ENCODE measurements at regions of chr20 and their contacts with region 1.

Region 1: DNA sequence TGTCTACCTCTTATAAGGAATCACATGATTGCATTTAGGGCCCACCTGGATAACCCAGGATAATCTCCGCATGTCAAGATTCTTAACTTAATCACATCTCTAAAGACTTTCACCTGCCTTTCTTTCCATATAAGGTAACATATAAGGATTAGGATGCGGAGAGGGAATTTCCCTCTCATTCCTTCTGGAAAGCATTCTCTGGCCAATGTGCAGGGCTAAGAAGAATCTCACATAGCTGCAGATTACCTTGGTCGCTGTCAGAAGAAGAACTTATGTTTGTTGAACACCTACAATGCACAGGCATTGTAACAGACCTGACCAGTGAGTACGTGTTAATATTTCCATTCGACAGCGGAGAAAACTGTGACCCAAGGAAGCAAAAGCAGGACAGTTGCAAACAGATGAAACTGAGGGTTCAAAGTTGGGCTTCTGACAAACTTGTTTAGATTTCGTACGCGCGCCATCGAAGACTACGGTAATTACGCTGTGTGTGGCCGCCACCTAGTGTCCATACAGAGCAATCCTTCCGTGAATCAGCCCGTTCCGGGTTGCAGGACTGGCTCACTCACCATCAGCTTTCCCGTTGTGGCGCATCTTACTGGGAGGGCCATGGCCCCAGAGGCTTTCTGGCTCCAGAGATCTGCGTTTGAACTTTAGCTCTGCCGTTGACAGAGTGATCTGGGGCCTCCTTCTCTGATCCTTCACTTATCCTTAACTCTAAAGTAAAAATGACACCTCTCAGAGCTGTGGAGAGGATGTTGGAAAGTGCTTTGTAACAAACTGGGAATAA is 9.5 kb downstream of the C20orf202 start:
- DNase-seq: peak; percentile 55 to 75 (median 65)
- ATAC-seq: peak in 3 of 4 donors; percentile 88 to 92 (median 91)
- H3K4me3 ChIP-seq: no peak overlapping the region
- H3K27ac ChIP-seq: no peak overlapping the region
- H3K4me1 ChIP-seq: peaks cover 0 to 7% (median 0%) of the 10 kb centered on the region in 12 donors
- H3K27me3 ChIP-seq: peaks cover 0 to 12% (median 0%) of the 10 kb centered on the region in 9 donors
- CTCF ChIP-seq: peak; percentile 67 to 87 (median 80)
- POLR2A ChIP-seq: no peak

Region 2: GRCh38 chr20:815914-816606 is 396.7 kb before region 1 on chr20:
- intact Hi-C with region 1: loop called in 7 of 10 experiments (anchors 2 to 10 kb)
- DNase-seq: peak in 4 of 5 donors; percentile 33 to 65 (median 44)
- ATAC-seq: peak in 3 of 4 donors; percentile 48 to 59 (median 48)
- H3K4me3 ChIP-seq: no peak overlapping the region
- H3K27ac ChIP-seq: no peak overlapping the region
- H3K4me1 ChIP-seq: peaks cover 0 to 6% (median 0%) of the 10 kb centered on the region in 12 donors
- H3K27me3 ChIP-seq: peaks cover 0 to 23% (median 0%) of the 10 kb centered on the region in 9 donors
- CTCF ChIP-seq: peak; percentile 94 to 99 (median 97)
- POLR2A ChIP-seq: no peak

Region 3: DNA sequence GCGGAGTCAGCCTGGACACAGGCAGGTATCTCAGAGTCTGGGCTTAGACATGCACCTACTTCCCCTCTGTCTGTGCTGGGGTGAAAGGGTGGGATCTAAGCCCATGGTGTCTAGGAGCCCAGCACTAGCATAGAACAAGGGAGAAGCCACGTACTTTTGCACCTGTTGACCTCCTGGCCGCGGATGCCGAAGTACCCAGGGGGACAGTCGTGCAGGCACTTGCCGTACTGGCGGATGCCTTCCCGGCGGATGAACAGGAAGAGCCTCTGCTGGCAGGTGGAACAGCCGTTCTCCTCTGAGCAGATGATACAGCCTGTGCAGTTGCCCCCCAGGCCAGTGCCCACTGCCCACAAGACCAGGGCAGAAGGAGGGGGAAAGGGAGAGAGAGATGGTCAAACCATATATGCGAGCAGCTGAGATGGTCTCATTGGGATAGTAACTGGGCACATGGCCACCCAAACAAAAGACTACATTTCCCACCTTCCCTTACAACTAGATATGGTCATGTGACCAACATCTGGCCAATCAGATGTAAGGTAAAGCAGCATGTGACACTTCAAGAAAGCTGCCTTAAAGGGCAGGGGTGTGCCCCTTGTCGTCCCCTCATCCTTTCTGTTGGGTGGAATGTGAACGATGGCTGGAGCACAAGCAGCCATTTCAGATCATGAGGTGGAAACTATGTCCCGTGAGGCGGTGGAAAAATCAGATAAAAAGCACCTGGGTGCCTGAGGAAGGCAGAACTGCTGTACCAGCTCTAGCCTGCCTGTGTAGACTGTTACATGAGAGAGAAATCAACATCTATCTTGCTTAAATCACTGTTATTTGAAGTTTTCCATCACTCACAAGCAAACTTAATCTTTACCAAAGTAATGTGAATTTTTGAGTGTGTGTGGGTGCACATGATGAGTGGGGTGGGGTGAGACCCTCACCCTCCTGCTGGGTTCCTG is 244.7 kb before region 1 on chr20:
- intact Hi-C with region 1: loop called in 1 of 10 experiments (anchors 10 kb)
- DNase-seq: peak in 1 of 5 donors; percentile 38
- ATAC-seq: no peak
- H3K4me3 ChIP-seq: no peak overlapping the region
- H3K27ac ChIP-seq: no peak overlapping the region
- H3K4me1 ChIP-seq: peaks cover 0 to 4% (median 0%) of the 10 kb centered on the region in 12 donors
- H3K27me3 ChIP-seq: peaks cover 0 to 27% (median 0%) of the 10 kb centered on the region in 9 donors
- CTCF ChIP-seq: no peak
- POLR2A ChIP-seq: no peak

Region 4: GRCh38 chr20:1118336-1119127 is 94.3 kb before region 1 on chr20 and contains the start of gene PSMF1:
- intact Hi-C with region 1: loop called in 1 of 10 experiments (anchors 10 kb)
- DNase-seq: peak; percentile 94 to 97 (median 96)
- ATAC-seq: peak; percentile 97 to 99 (median 99)
- H3K4me3 ChIP-seq: peak within 1 kb of the TSS; percentile 68 to 100 (median 95)
- H3K27ac ChIP-seq: peak within 1 kb of the TSS; percentile 9 to 92 (median 80)
- H3K4me1 ChIP-seq: peaks cover 16 to 55% (median 50%) of the 10 kb centered on the region in 12 donors
- H3K27me3 ChIP-seq: no peaks in the 10 kb centered on the region
- CTCF ChIP-seq: peak in 5 of 12 donors; percentile 19 to 30 (median 23)
- POLR2A ChIP-seq: peak in 1 of 2 donors; percentile 43
- total RNA-seq, gene PSMF1: 116 to 184 (median 141) TPM

Region 5: GRCh38 chr20:1177680-1178079 is 35.1 kb before region 1 on chr20:
- intact Hi-C with region 1: loop called in 1 of 10 experiments (anchors 5 kb)
- DNase-seq: no peak
- ATAC-seq: peak in 1 of 4 donors; percentile 15
- H3K4me3 ChIP-seq: no peak overlapping the region
- H3K27ac ChIP-seq: no peak overlapping the region
- H3K4me1 ChIP-seq: no peaks in the 10 kb centered on the region
- H3K27me3 ChIP-seq: no peaks in the 10 kb centered on the region
- CTCF ChIP-seq: peak in 2 of 12 donors; percentile 7 to 16
- POLR2A ChIP-seq: no peak

Region 6: GRCh38 chr20:1281279-1282057 is 68.7 kb after region 1 on chr20:
- intact Hi-C with region 1: no loop called
- DNase-seq: no peak
- ATAC-seq: peak; percentile 45 to 82 (median 64)
- H3K4me3 ChIP-seq: no peak overlapping the region
- H3K27ac ChIP-seq: peak overlapping the region in 10 of 12 donors; percentile 2 to 52 (median 40)
- H3K4me1 ChIP-seq: peaks cover 0 to 16% (median 7%) of the 10 kb centered on the region in 12 donors
- H3K27me3 ChIP-seq: no peaks in the 10 kb centered on the region
- CTCF ChIP-seq: no peak
- POLR2A ChIP-seq: no peak

Measured in heart left ventricle (tissue), 16 donors.